ENCODE measurements at regions of chr7 and their contacts with region 1.

Region 1: GRCh38 chr7:7424151-7424873 is 111.4 kb downstream of the COL28A1 start:
- DNase-seq: peak; percentile 52
- H3K4me3 Mint-ChIP-seq: peak overlapping the region; percentile 42
- H3K27ac Mint-ChIP-seq: no peak overlapping the region
- H3K4me1 Mint-ChIP-seq: no peaks in the 10 kb centered on the region
- H3K27me3 Mint-ChIP-seq: no peaks in the 10 kb centered on the region

Region 2: DNA sequence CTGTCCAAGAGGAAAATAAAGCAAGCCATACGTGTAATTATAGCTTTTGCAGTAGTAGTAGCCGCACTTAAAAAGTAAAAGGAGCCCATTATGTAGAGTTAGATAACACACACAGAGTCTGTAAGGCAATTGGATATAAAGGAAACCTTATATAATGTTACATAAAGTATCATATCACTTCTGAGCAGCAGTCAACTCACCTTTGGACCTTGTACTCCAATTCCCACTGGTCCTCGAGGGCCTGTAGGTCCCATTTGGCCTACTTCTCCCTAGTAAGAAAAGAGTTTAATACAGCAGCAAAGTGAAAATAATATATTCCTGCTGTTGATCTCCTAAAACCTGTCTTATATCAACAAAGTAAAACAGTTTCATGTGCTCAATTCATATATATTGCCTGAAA is 27.8 kb after region 1 on chr7:
- CTCF ChIA-PET with region 1: no interaction called
- intact Hi-C with region 1: no loop called
- DNase-seq: no peak
- H3K4me3 Mint-ChIP-seq: no peak overlapping the region
- H3K27ac Mint-ChIP-seq: no peak overlapping the region
- H3K4me1 Mint-ChIP-seq: no peaks in the 10 kb centered on the region
- H3K27me3 Mint-ChIP-seq: no peaks in the 10 kb centered on the region

Region 3: GRCh38 chr7:7542251-7542835 is 118.0 kb after region 1 on chr7:
- CTCF ChIA-PET with region 1: no interaction called
- intact Hi-C with region 1: loop called (anchors 2 kb)
- DNase-seq: no peak
- H3K4me3 Mint-ChIP-seq: no peak overlapping the region
- H3K27ac Mint-ChIP-seq: no peak overlapping the region
- H3K4me1 Mint-ChIP-seq: no peaks in the 10 kb centered on the region
- H3K27me3 Mint-ChIP-seq: no peaks in the 10 kb centered on the region

Region 4: GRCh38 chr7:7882888-7883287 is 458.6 kb after region 1 on chr7:
- CTCF ChIA-PET with region 1: no interaction called
- intact Hi-C with region 1: no loop called
- DNase-seq: no peak
- H3K4me3 Mint-ChIP-seq: no peak overlapping the region
- H3K27ac Mint-ChIP-seq: no peak overlapping the region
- H3K4me1 Mint-ChIP-seq: no peaks in the 10 kb centered on the region
- H3K27me3 Mint-ChIP-seq: no peaks in the 10 kb centered on the region